Mucosa of descending colon (tissue), 3 donors: ENCODE measurements at regions of chr17 and their contacts with region 1.

Region 1: DNA sequence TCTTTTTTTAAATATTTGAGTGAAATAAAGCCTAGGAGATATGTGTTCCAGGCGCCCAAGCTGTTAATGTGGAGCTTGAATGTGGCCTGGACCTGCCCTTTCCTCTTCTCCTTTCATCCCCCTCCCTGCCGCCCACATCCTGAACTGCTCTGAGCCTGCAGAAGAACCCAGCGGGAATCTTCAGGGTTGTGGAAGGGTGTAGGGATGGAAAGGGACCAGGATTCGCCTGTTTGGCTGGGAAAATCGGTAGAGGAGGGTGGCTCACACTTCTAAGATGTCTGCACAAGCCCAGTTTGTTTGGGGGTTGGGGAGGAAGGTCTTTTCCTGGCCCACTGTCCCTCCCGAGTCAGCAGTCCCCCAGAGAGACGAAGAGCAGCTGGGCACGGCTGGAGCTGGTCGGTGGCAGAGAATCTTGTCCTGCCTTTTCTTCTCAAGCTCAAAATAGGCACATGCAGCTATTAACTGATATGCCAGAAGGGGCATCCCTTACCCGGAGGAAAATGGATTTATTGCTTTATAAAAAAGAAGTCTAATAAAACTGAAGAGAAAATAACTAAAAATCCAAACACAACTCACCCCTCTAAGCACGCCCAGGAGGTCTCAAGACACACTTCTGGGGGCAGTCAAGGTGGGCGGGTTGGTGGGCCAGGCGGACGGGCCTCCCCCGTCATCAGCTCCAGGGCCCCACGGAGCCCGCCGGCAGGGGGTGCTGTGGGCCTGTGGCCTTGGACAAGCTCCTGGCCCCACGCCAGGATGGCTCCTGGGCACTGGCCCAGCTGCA is 11.5 kb upstream of the PITPNA start:
- DNase-seq: peak; percentile 89 to 92 (median 92)
- ATAC-seq: peak; percentile 85
- H3K4me3 ChIP-seq: no peak overlapping the region
- H3K4me1 ChIP-seq: peaks cover 15% of the 10 kb centered on the region
- CTCF ChIP-seq: peak; percentile 89

Region 2: GRCh38 chr17:1488030-1488863 is 85.9 kb before region 1 on chr17:
- intact Hi-C with region 1: no loop called
- DNase-seq: peak; percentile 88 to 92 (median 90)
- ATAC-seq: peak; percentile 59
- H3K4me3 ChIP-seq: peak overlapping the region; percentile 31
- H3K4me1 ChIP-seq: peaks cover 49% of the 10 kb centered on the region
- CTCF ChIP-seq: no peak

Region 3: DNA sequence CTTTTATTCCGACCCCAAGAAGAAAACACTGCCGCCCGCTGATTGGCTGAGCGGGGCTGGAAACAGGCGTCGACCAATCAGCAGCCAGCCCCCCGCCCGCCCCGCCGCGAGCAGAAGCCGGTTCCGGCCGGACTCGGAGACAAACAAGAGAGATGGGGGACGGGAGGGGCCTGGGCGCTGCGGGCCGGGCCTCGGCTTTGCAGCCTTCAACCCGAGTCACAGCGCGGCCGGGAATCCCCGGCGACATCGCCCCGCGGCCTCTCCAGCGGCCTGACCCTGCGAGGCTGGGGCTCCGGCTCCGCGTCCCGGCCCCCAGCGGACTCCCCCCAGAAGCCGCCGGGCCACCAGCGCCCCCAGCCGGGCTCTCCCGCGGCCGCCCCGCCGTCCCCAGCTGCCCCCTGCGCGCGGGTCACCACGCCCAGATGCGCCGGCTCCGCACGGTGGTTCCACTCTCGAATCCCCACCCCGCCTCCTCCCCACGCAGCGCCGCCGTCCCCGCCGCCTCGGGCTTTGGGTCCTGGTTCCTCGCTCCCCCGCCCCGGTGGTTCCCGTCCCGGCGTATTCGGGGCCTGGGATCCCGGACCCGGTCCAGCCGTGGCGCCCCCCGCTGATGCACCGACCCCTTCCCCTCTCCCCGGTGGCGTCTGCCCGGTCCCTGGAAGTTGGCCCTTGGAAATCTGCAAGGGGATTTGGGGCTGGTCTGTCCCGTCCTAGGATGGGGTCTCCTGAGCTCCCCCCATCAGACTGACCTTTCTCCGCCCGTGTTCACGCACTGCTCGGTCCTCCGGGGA is 54.9 kb after region 1 on chr17:
- intact Hi-C with region 1: loop called (anchors 2 to 5 kb)
- DNase-seq: peak; percentile 95 to 97 (median 96)
- ATAC-seq: peak; percentile 88
- H3K4me3 ChIP-seq: peak overlapping the region; percentile 50
- H3K4me1 ChIP-seq: peaks cover 6% of the 10 kb centered on the region
- CTCF ChIP-seq: no peak